ENCODE measurements at regions of chr2 and their contacts with region 1.

Region 1: GRCh38 chr2:102020596-102021181 is 28.9 kb downstream of the IL1R2 start:
- DNase-seq: peak; percentile 80
- ATAC-seq: peak; percentile 97
- H3K4me3 ChIP-seq: no peak overlapping the region
- H3K4me3 Mint-ChIP-seq: no peak overlapping the region
- H3K27ac ChIP-seq: no peak overlapping the region
- H3K27ac Mint-ChIP-seq: no peak overlapping the region
- H3K4me1 ChIP-seq: peaks cover 0 to 3% of the 10 kb centered on the region in 2 donors
- H3K4me1 Mint-ChIP-seq: peaks cover 4% of the 10 kb centered on the region
- H3K27me3 ChIP-seq: peaks cover 0 to 8% (median 0%) of the 10 kb centered on the region in 4 experiments
- H3K27me3 Mint-ChIP-seq: peaks cover 5% of the 10 kb centered on the region
- CTCF ChIP-seq: peak; percentile 99

Region 2: DNA sequence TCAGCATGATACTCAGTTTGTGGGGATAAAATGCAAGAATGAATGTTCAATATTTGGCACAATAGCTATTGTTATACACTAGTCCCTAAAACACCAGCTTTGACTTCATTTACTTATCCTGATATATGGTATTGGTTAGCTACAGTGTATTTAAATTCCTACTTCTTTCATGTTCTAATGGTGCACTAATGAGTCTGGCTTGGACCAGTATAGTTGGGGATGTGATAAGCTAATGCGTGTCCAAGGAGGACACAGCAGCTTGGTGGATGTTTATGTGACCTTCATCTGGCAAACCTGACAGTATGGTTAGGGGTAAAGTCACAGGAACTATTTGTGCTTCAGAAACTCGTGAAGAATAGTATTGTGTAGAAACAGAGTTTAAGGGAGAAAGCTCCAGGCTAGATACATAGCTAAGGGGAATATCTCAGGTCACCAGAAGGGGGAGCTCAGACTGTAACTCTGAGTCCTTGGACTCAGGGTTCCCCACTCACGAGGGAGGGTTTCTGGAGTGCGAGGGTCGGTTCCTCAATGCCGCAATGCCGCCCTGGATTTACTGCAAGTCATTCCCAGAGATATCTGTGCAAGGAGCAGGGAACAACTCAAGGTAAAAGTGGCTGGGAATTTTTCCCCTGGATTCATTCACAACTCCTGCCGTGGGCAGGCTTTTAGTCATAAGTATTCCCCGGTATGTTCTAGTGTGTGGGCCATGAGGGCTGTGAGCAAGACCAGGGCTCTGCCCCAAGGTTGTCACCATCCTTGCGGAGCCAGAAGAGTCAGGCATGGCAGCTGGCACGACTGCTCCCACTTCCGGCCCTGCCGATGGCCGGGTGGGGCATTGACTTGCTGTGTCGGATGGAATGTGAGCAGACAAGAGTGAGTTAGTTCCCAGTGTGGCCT is 14.5 kb before region 1 on chr2:
- CTCF ChIA-PET with region 1: interaction called, 16 read pairs
- POLR2A ChIA-PET with region 1: no interaction called
- intact Hi-C with region 1: no loop called
- DNase-seq: peak; percentile 40
- ATAC-seq: no peak
- H3K4me3 ChIP-seq: no peak overlapping the region
- H3K4me3 Mint-ChIP-seq: no peak overlapping the region
- H3K27ac ChIP-seq: no peak overlapping the region
- H3K27ac Mint-ChIP-seq: no peak overlapping the region
- H3K4me1 ChIP-seq: peaks cover 0 to 9% of the 10 kb centered on the region in 2 donors
- H3K4me1 Mint-ChIP-seq: peaks cover 9% of the 10 kb centered on the region
- H3K27me3 ChIP-seq: peaks cover 0 to 6% (median 0%) of the 10 kb centered on the region in 4 experiments
- H3K27me3 Mint-ChIP-seq: peaks cover 5% of the 10 kb centered on the region
- CTCF ChIP-seq: peak; percentile 58

Region 3: DNA sequence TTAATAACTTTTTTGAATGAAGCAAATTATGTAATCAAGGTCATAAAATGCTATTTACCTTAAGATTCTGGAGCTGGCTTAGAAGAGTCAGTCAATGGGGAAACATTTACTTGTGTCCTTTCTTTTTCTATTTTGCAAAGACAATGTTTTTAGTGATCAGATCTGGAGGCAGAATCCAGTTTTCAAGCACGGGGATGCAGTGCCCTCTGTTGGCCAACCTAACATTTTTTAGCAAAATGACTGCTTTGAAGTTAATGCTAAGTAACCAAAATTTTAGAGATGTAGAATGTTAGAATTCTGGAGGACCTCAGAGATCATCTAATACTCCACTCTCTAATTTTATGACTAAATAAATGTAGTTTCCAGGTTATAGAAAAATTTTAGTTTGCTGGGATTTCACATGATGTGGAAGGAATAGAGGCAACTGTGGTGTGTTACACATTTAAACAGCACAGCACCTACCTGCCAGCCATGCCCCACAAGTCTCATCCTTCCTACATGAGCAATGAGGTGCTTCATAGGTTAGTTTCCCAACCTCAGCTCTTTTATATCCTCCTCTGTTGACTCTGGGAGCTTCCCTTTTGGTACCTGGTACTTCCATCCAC is 428.8 kb after region 1 on chr2:
- CTCF ChIA-PET with region 1: interaction called, 18 read pairs
- POLR2A ChIA-PET with region 1: no interaction called
- intact Hi-C with region 1: loop called (anchors 1 kb)
- DNase-seq: peak; percentile 60
- ATAC-seq: no peak
- H3K4me3 ChIP-seq: no peak overlapping the region
- H3K4me3 Mint-ChIP-seq: no peak overlapping the region
- H3K27ac ChIP-seq: no peak overlapping the region
- H3K27ac Mint-ChIP-seq: no peak overlapping the region
- H3K4me1 ChIP-seq: no peaks in the 10 kb centered on the region
- H3K4me1 Mint-ChIP-seq: no peaks in the 10 kb centered on the region
- H3K27me3 ChIP-seq: no peaks in the 10 kb centered on the region
- H3K27me3 Mint-ChIP-seq: peaks cover 4% of the 10 kb centered on the region
- CTCF ChIP-seq: peak; percentile 78

Measured in B cell (primary cell).